ENCODE measurements at regions of chr11 and their contacts with region 1.

Region 1: GRCh38 chr11:75214411-75214821 is 26.2 kb upstream of the TPBGL start:
- DNase-seq: peak; percentile 85
- H3K4me3 Mint-ChIP-seq: no peak overlapping the region
- H3K27ac Mint-ChIP-seq: no peak overlapping the region
- H3K4me1 Mint-ChIP-seq: no peaks in the 10 kb centered on the region
- H3K27me3 Mint-ChIP-seq: peaks cover 76% of the 10 kb centered on the region
- CTCF ChIP-seq: no peak

Region 2: GRCh38 chr11:75233742-75234172 is 19.3 kb after region 1 on chr11:
- CTCF ChIA-PET with region 1: interaction called, 5 read pairs
- intact Hi-C with region 1: loop called (anchors 1 kb)
- DNase-seq: peak; percentile 67
- H3K4me3 Mint-ChIP-seq: no peak overlapping the region
- H3K27ac Mint-ChIP-seq: no peak overlapping the region
- H3K4me1 Mint-ChIP-seq: no peaks in the 10 kb centered on the region
- H3K27me3 Mint-ChIP-seq: peaks cover 88% of the 10 kb centered on the region
- CTCF ChIP-seq: no peak

Measured in Calu3 (cell line).